HepG2 (cell line): ENCODE measurements at regions of chr1 and their contacts with region 1.

Region 1: GRCh38 chr1:2233997-2234761 is 6.1 kb downstream of the SKI start:
- DNase-seq: peak; percentile 93
- ATAC-seq: peak; percentile 61
- H3K4me3 ChIP-seq: peak overlapping the region; percentile 74 to 96 (median 95)
- H3K27ac ChIP-seq: peak overlapping the region; percentile 81
- H3K4me1 ChIP-seq: peaks cover 69% of the 10 kb centered on the region
- H3K27me3 ChIP-seq: no peaks in the 10 kb centered on the region; a peak in 1 of 5 replicates
- CTCF ChIP-seq: peak; percentile 26; the same call in 1 of the 2 replicates
- EP300 ChIP-seq: peak; percentile 88 to 92
- POLR2A ChIP-seq: no peak
- RAD21 ChIP-seq: no peak

Region 2: GRCh38 chr1:2189459-2190425 is 44.4 kb before region 1 on chr1:
- CTCF ChIA-PET with region 1: no interaction called
- POLR2A ChIA-PET with region 1: interaction called, 18 read pairs
- in situ Hi-C with region 1: no loop called
- intact Hi-C with region 1: no loop called
- DNase-seq: peak; percentile 93
- ATAC-seq: peak; percentile 89
- H3K4me3 ChIP-seq: peak overlapping the region; percentile 56 to 78 (median 70); a peak in 5 of 6 replicates
- H3K27ac ChIP-seq: peak overlapping the region; percentile 75
- H3K4me1 ChIP-seq: peaks cover 41% of the 10 kb centered on the region
- H3K27me3 ChIP-seq: no peaks in the 10 kb centered on the region
- CTCF ChIP-seq: 0 out of 2 replicates have a peak, but pooled peaks have one; percentile 2
- EP300 ChIP-seq: no peak
- POLR2A ChIP-seq: peak in 1 of 2 experiments; percentile 55; a peak in 1 of 4 replicates
- RAD21 ChIP-seq: no peak

Region 3: DNA sequence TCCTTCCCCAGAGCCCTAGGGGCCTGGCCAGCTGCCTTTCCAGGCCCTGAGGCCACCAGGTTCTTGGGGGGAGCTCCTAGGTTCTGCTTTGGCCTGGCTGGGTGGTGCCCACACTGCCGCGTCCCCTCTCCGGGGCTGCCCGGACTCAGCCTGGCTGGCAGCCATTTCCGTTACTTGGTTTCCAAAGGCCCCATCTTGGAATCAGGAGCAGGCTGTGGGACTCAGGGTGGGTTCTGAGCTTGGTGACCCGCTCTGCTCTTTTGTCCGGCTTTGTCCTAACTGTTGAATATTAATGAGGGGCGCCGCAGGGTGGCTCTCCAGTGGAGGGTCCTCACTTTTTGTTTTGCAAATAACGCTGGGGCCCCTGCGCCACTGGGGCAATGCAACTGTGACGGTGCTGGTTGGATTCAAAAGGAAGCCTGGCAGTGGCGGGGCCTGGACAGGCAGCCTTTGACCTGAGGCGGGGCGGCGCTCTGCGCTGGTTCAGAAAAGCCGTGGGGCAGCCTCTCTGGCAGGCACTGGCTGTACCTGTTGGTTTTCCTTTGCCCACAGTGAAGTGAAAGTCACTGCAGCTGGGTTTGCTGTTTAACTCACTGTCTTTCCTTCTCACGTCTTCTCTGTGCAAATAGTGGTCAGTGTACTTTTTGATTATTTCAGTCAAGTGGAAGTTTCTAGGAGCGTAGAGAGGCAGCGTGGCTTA is 14.1 kb after region 1 on chr1:
- CTCF ChIA-PET with region 1: no interaction called
- POLR2A ChIA-PET with region 1: interaction called, 50 read pairs
- in situ Hi-C with region 1: no loop called
- intact Hi-C with region 1: loop called (anchors 2 kb)
- DNase-seq: peak; percentile 65
- ATAC-seq: peak; percentile 79
- H3K4me3 ChIP-seq: peak overlapping the region; percentile 38 to 54 (median 43); a peak in 5 of 6 replicates
- H3K27ac ChIP-seq: peak overlapping the region; percentile 72
- H3K4me1 ChIP-seq: peaks cover 73% of the 10 kb centered on the region
- H3K27me3 ChIP-seq: no peaks in the 10 kb centered on the region
- CTCF ChIP-seq: peak; percentile 57
- EP300 ChIP-seq: no peak; a peak in 1 of 4 replicates
- POLR2A ChIP-seq: no peak
- RAD21 ChIP-seq: 0 out of 2 replicates have a peak, but pooled peaks have one; percentile 23

Region 4: GRCh38 chr1:2270260-2271100 is 36.3 kb after region 1 on chr1:
- CTCF ChIA-PET with region 1: no interaction called
- POLR2A ChIA-PET with region 1: no interaction called
- in situ Hi-C with region 1: no loop called
- intact Hi-C with region 1: loop called (anchors 1 kb)
- DNase-seq: peak; percentile 50
- ATAC-seq: peak; percentile 71
- H3K4me3 ChIP-seq: peak overlapping the region; percentile 16 to 53 (median 31); a peak in 4 of 6 replicates
- H3K27ac ChIP-seq: peak overlapping the region; percentile 59
- H3K4me1 ChIP-seq: peaks cover 52% of the 10 kb centered on the region
- H3K27me3 ChIP-seq: no peaks in the 10 kb centered on the region
- CTCF ChIP-seq: peak; percentile 65
- EP300 ChIP-seq: peak in 1 of 2 experiments; percentile 23; a peak in 1 of 4 replicates
- POLR2A ChIP-seq: no peak
- RAD21 ChIP-seq: peak; percentile 45; the same call in 1 of the 2 replicates

Region 5: GRCh38 chr1:2283991-2284895 is 50.1 kb after region 1 on chr1:
- CTCF ChIA-PET with region 1: no interaction called
- POLR2A ChIA-PET with region 1: no interaction called
- in situ Hi-C with region 1: no loop called
- intact Hi-C with region 1: no loop called
- DNase-seq: peak; percentile 15
- ATAC-seq: peak; percentile 43
- H3K4me3 ChIP-seq: no peak overlapping the region
- H3K27ac ChIP-seq: peak overlapping the region; percentile 19
- H3K4me1 ChIP-seq: peaks cover 31% of the 10 kb centered on the region
- H3K27me3 ChIP-seq: no peaks in the 10 kb centered on the region
- CTCF ChIP-seq: no peak
- EP300 ChIP-seq: no peak
- POLR2A ChIP-seq: no peak
- RAD21 ChIP-seq: no peak

Region 6: GRCh38 chr1:2314803-2315673 is 80.9 kb after region 1 on chr1:
- CTCF ChIA-PET with region 1: no interaction called
- POLR2A ChIA-PET with region 1: interaction called, 13 read pairs
- in situ Hi-C with region 1: no loop called
- intact Hi-C with region 1: no loop called
- DNase-seq: peak; percentile 21
- ATAC-seq: no peak
- H3K4me3 ChIP-seq: peak overlapping the region; percentile 55 to 78 (median 64); a peak in 5 of 6 replicates
- H3K27ac ChIP-seq: no peak overlapping the region
- H3K4me1 ChIP-seq: peaks cover 79% of the 10 kb centered on the region
- H3K27me3 ChIP-seq: peaks cover 4 to 23% of the 10 kb centered on the region in 2 experiments; a peak in 3 of 5 replicates
- CTCF ChIP-seq: peak; percentile 65
- EP300 ChIP-seq: no peak
- POLR2A ChIP-seq: no peak
- RAD21 ChIP-seq: no peak

Region 7: DNA sequence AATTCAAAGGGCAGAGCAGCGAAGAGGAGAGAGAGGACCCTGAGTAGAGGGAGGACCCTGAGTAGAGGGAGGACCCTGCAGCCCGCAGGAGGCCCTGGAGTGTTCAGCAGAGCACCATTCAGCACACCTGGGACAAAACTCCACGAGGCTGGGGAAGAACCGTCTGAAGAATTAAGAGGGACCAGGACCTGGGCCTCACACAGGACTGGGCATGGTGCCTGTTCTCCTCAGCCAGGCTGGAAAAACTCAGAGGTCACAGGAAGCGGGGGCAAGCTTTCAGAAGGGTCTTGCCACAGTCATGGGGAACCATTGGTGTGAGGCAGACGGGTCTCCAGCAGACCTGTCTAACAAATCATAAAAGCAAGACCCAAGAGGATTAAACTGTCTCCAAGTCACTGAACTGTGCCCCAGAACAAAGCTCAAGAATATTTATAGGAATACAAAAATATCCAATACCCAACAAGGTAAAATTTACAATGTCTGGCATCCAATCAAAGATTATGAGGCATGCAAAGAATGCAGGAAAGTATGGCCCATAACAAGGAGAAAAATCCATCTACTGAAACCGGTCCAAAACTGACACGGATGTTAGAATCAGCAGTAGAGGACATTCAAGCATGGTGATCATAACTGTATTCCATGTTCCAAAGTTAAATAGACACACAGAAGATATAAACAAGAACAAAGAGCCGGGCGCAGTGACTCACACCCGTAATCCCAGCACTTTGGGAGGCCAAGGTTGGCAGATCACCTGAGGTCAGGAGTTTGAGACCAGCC is 126.6 kb after region 1 on chr1:
- CTCF ChIA-PET with region 1: no interaction called
- POLR2A ChIA-PET with region 1: no interaction called
- in situ Hi-C with region 1: no loop called
- intact Hi-C with region 1: no loop called
- DNase-seq: no peak
- ATAC-seq: no peak
- H3K4me3 ChIP-seq: no peak overlapping the region
- H3K27ac ChIP-seq: no peak overlapping the region
- H3K4me1 ChIP-seq: no peaks in the 10 kb centered on the region
- H3K27me3 ChIP-seq: no peaks in the 10 kb centered on the region
- CTCF ChIP-seq: no peak
- EP300 ChIP-seq: no peak
- POLR2A ChIP-seq: no peak
- RAD21 ChIP-seq: no peak